Sigmoid colon (tissue), 7 donors: ENCODE measurements at regions of chr19 and their contacts with region 1.

Region 1: DNA sequence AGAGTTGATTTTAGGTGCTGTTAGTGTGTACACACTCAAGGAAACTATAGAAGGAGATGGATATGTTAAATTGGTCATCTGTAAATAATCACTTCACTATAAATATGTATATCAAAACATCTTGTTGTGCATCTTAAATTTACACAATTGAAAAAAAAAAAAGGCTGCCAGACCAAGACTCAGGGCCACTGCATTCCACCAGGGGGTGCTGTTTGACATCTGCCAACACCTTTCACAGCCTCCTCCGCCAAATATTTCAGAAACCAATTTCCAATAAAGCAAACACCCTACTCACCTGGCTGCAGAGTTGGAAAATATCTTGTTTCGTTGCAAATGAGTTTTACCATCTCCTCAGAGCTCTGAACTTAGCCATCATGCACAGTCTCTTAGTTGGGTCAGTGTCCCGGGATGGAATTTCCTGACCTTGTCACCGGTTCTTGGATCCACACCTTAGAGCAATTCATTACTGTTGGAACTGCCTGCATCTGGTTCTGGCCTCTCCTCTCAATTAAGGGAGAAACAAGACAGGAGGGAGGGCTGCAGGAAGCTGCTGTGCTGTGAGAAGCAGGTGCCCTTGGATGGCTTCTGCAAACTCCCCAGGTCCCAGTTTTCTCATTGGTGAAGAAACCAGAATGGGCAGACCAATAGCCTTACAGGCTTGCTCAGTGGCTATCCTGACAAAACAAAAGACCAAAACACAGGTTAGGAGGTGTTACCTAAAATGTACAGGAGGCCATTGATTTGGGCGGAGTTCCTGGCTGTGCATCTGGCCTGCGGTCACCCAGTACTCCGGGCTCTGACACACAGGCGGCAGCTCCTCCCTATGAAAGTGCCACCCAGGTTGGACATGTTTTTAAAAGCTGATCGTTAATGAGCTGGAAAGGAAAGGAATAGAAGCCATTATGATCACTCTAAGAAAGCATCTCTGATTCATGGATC is 746.6 kb downstream of the UQCRFS1 start:
- DNase-seq: peak; percentile 63
- H3K4me3 ChIP-seq: no peak overlapping the region
- H3K27ac ChIP-seq: no peak overlapping the region
- H3K4me1 ChIP-seq: no peaks in the 10 kb centered on the region
- H3K27me3 ChIP-seq: peaks cover 0 to 7% (median 0%) of the 10 kb centered on the region in 3 donors
- CTCF ChIP-seq: peak in 3 of 4 experiments; percentile 50 to 64 (median 59)
- EP300 ChIP-seq: no peak
- POLR2A ChIP-seq: no peak

Region 2: DNA sequence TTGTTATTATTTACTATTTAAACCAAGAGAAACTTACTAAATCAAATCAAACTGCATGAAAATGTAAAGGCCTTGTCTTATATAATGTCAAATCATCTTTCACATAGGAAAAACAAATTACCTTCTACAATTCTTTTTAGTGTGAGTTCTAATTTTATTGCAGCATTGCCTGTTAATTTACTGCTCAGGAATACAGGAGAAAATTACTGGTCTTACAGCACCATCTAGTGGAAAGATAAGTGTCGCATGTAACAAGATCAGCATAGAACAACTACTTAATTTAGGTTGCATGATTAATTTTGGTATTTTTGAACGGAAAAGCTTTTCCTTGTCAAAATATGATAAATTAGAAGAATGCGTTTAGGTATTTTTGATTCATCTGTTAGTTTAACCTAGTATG is 243.9 kb after region 1 on chr19:
- intact Hi-C with region 1: loop called (anchors 2 kb)
- DNase-seq: no peak
- H3K4me3 ChIP-seq: no peak overlapping the region
- H3K27ac ChIP-seq: no peak overlapping the region
- H3K4me1 ChIP-seq: no peaks in the 10 kb centered on the region
- H3K27me3 ChIP-seq: no peaks in the 10 kb centered on the region
- CTCF ChIP-seq: peak in 3 of 4 experiments; percentile 36 to 62 (median 46)
- EP300 ChIP-seq: no peak
- POLR2A ChIP-seq: no peak

Region 3: GRCh38 chr19:28737021-28737895 is 270.9 kb after region 1 on chr19:
- intact Hi-C with region 1: no loop called
- DNase-seq: no peak
- H3K4me3 ChIP-seq: peak overlapping the region in 1 of 4 donors; percentile 10
- H3K27ac ChIP-seq: peak overlapping the region in 3 of 4 donors; percentile 34 to 52 (median 50)
- H3K4me1 ChIP-seq: peaks cover 0 to 22% (median 16%) of the 10 kb centered on the region in 4 donors
- H3K27me3 ChIP-seq: no peaks in the 10 kb centered on the region
- CTCF ChIP-seq: peak in 2 of 4 experiments; percentile 41 to 58
- EP300 ChIP-seq: no peak
- POLR2A ChIP-seq: no peak